ENCODE measurements at regions of chr22 and their contacts with region 1.

Region 1: GRCh38 chr22:46367707-46368191 is 32.2 kb downstream of the TRMU start:
- DNase-seq: peak; percentile 64
- ATAC-seq: peak; percentile 75 to 93
- H3K4me3 ChIP-seq: no peak overlapping the region
- H3K27ac ChIP-seq: peak overlapping the region; percentile 48 to 80; a peak in 5 of 6 replicates
- H3K4me1 ChIP-seq: peaks cover 19% of the 10 kb centered on the region
- CTCF ChIP-seq: peak; percentile 70
- EP300 ChIP-seq: no peak
- POLR2A ChIP-seq: no peak
- RAD21 ChIP-seq: peak; percentile 82 to 83

Region 2: DNA sequence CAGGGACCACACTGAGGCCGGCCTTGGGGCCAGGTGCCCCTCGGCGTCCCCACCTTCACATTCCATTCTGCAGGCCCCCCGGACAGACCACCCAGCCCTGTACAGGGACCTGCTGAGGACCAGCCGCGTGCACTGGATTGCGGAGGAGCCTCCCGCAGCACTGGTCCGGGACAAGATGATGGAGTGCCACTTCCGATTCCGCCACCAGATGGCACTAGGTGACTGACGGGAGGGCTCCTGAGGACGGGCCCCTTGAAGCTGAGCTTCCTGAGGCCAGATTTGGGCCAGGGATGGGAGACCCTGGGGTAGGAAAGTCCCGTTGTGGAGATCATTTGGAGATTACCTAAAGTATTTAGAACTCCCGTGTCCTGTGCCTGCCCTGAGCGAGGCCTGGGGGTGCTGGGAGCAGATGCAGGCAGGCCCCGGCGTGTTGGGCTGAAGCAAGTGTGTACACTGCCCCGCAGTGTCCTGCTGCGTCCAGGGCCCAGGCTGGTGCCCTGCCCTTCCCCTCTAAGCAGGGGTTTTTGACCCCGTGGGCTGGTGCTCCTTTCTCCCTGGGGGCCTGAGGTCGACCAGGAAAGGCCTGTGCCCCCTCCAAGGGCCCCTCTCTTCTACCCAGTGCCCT is 12.3 kb before region 1 on chr22:
- CTCF ChIA-PET with region 1: interaction called, 50 read pairs
- POLR2A ChIA-PET with region 1: no interaction called
- DNase-seq: peak; percentile 59 to 72
- ATAC-seq: peak; percentile 58 to 82
- H3K4me3 ChIP-seq: no peak overlapping the region
- H3K27ac ChIP-seq: peak overlapping the region in 1 of 2 experiments; percentile 76; a peak in 3 of 6 replicates
- H3K4me1 ChIP-seq: peaks cover 14% of the 10 kb centered on the region
- CTCF ChIP-seq: peak; percentile 61
- EP300 ChIP-seq: no peak
- POLR2A ChIP-seq: no peak
- RAD21 ChIP-seq: peak; percentile 81 to 86

Region 3: GRCh38 chr22:46390652-46391301 is 23.0 kb after region 1 on chr22:
- CTCF ChIA-PET with region 1: interaction called, 18 read pairs
- POLR2A ChIA-PET with region 1: no interaction called
- DNase-seq: no peak
- ATAC-seq: no peak
- H3K4me3 ChIP-seq: no peak overlapping the region
- H3K27ac ChIP-seq: no peak overlapping the region
- H3K4me1 ChIP-seq: no peaks in the 10 kb centered on the region
- CTCF ChIP-seq: no peak
- EP300 ChIP-seq: no peak
- POLR2A ChIP-seq: no peak
- RAD21 ChIP-seq: no peak

Region 4: DNA sequence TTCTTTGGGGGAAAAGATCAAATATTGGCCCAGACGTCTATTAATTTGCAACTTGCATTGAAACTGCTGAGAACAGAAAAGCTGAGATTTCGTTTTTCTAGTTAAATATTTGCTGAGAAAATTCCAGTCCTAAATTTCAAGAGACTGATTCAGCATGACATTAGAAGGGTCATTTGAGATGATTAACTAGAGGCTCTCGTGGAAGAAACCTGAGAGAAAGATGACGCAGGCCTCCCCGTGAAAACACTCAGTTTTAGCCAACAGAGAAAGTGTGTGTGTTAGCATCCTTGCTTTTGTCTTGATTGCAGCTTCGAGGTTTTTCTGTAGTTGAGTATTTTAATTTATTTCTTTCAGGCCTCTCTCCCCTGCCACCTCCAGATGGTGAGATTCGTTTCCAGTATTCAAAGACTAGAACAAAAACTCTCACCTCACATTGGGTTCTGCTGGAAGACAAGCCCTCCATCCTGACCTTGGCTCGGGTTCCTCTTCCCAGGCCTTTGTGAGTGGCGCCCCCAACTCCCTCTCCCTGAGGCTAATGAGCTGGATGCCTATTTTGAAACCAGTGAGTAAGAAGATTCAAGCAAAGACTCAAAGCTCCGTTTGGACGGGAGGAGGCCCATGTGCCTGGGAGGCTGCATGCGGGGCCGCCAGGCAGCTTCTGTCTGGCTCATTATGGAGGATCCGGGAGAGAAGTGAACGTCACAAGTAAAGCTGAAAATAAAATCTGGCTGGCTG is 117.3 kb after region 1 on chr22:
- CTCF ChIA-PET with region 1: interaction called, 10 read pairs
- POLR2A ChIA-PET with region 1: no interaction called
- DNase-seq: peak; percentile 67 to 78
- ATAC-seq: peak; percentile 51 to 66
- H3K4me3 ChIP-seq: peak overlapping the region; percentile 11; the same call in 1 of the 3 replicates
- H3K27ac ChIP-seq: peak overlapping the region; percentile 96 to 98
- H3K4me1 ChIP-seq: peaks cover 82% of the 10 kb centered on the region
- CTCF ChIP-seq: no peak
- EP300 ChIP-seq: peak; percentile 40 to 71; a peak in 2 of 5 replicates
- POLR2A ChIP-seq: no peak
- RAD21 ChIP-seq: 0 out of 5 replicates have a peak, but pooled peaks of 1 of the 2 experiments have one; percentile 11

Region 5: GRCh38 chr22:46533434-46533833 is 165.7 kb after region 1 on chr22:
- CTCF ChIA-PET with region 1: interaction called, 171 read pairs
- POLR2A ChIA-PET with region 1: interaction called, 8 read pairs
- DNase-seq: peak; percentile 77 to 87
- ATAC-seq: peak; percentile 51 to 81; a peak in 5 of 6 replicates
- H3K4me3 ChIP-seq: peak overlapping the region; percentile 53
- H3K27ac ChIP-seq: peak overlapping the region; percentile 87 to 91
- H3K4me1 ChIP-seq: peaks cover 51% of the 10 kb centered on the region
- CTCF ChIP-seq: peak; percentile 47
- EP300 ChIP-seq: no peak
- POLR2A ChIP-seq: no peak
- RAD21 ChIP-seq: peak; percentile 47 to 51; a peak in 4 of 5 replicates

Region 6: GRCh38 chr22:46547883-46548244 is 180.1 kb after region 1 on chr22:
- CTCF ChIA-PET with region 1: interaction called, 171 read pairs
- POLR2A ChIA-PET with region 1: no interaction called
- DNase-seq: no peak
- ATAC-seq: peak; percentile 40 to 43; a peak in 2 of 6 replicates
- H3K4me3 ChIP-seq: no peak overlapping the region
- H3K27ac ChIP-seq: peak overlapping the region; percentile 32 to 81; a peak in 3 of 6 replicates
- H3K4me1 ChIP-seq: peaks cover 32% of the 10 kb centered on the region
- CTCF ChIP-seq: no peak
- EP300 ChIP-seq: no peak
- POLR2A ChIP-seq: no peak
- RAD21 ChIP-seq: no peak